ENCODE measurements at regions of chr1 and their contacts with region 1.

Region 1: DNA sequence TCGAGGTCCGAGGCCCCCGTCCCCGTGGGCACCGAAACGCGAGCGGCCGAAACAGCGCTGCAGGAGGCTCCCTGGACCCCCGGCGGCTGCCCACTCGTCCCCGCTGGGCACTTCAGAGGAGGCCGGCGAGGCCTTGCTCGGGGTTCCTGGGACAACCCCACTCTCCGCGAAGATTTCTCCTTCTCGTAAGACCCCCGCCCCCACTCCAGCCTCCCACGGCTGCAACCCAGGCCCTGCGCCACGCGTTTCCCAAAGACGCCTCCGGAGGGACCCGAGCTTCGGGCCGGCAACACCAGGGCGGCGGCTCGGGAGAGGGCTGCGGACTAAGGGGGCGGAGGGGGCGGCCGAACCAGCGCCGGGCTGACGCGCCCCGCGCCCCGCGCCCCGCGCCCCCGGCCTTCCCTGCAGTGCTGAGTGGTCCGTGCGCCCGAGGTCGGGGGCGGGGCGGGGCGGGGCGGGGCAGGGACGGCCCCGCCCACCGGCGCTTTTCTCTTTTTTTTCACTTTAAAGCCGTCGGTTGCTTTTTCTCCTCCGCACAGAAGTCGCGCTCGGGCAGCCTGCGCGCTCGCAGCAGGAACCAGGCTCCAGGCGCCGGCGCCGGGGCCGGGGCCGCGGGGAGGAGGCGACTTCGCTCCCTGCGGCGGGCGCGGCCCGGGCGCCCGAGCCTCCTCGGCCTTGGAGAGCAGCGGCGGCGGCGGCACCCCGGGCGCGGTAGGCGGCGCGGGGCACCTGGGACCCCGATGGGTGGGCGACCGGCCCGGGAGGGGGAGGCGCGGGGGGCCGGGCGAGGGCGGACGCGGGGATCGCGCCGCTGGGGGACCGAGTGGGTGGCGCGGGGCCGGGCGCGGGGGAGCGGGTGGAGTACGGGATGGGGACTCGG is at the start of gene SPSB1:
- DNase-seq: peak; percentile 84 to 91 (median 87)
- ATAC-seq: peak; percentile 74
- H3K4me3 ChIP-seq: peak within 1 kb of the TSS; percentile 83
- H3K4me1 ChIP-seq: peaks cover 28% of the 10 kb centered on the region
- CTCF ChIP-seq: no peak
- total RNA-seq, gene SPSB1: 22.1 to 35.5 (median 26.1) TPM

Region 2: DNA sequence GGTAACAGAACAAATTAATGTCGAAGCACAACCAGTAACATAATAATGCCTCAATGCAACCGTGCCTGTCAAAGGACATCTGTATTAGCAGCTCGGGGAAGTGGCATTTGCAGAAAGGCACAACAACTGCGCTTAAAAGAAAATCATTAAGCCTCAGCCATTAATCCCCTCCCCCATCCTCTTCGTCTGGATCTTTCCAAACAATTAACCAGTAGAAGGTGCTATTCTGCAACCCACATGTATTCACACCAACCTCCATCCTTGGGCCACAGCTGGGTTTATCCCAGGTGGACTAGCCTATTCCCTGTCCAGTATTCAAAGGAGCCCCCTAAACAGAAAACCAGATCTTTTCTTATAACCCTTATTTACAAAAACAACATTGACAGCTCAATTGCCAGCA is 477.7 kb before region 1 on chr1:
- intact Hi-C with region 1: no loop called
- DNase-seq: peak in 1 of 3 donors; percentile 18
- ATAC-seq: no peak
- H3K4me3 ChIP-seq: no peak overlapping the region
- H3K4me1 ChIP-seq: peaks cover 8% of the 10 kb centered on the region
- CTCF ChIP-seq: no peak

Region 3: GRCh38 chr1:9362488-9362887 is 69.9 kb after region 1 on chr1:
- intact Hi-C with region 1: loop called in 1 of 2 experiments (anchors 10 kb)
- DNase-seq: no peak
- ATAC-seq: no peak
- H3K4me3 ChIP-seq: no peak overlapping the region
- H3K4me1 ChIP-seq: no peaks in the 10 kb centered on the region
- CTCF ChIP-seq: no peak

Region 4: GRCh38 chr1:9438431-9439073 is 146.0 kb after region 1 on chr1:
- intact Hi-C with region 1: loop called in 1 of 2 experiments (anchors 10 kb)
- DNase-seq: no peak
- ATAC-seq: no peak
- H3K4me3 ChIP-seq: no peak overlapping the region
- H3K4me1 ChIP-seq: peaks cover 39% of the 10 kb centered on the region
- CTCF ChIP-seq: no peak

Region 5: DNA sequence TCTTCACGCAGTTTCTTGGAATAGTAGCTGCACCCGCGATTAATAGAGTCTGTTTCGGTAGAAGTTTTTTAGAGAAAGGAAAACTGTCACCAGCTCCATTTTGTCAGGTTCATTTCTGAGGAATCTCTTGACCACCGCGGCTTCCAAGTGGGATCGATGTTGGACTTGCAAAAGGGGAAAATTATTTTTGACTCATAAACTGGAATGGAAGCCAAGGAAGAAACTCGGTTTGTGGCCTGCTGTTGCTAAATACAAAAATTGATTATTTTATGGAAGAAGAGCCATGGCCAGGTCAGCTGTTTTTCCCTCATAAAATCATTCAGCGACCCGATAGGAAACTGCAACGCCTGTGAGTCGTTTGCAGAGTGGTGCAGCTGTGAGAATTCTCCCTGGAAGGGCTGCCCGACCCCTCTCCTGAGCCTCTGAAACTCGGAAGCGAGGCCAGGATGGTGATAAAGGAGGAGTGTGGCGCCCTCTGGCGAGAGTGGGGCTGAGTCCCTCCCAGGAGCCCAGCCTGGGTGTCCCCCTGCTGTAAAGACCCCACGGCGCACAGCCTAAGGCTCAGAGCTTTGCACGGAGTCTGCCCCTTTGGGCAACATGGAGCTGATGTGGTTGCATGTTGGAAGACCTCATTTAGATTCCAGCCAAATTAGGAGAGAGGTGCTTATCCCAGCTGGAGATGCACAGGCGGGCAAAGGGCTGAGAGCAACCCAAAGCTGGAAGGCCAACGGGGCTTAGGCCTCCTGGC is 163.1 kb after region 1 on chr1:
- intact Hi-C with region 1: loop called (anchors 10 kb)
- DNase-seq: peak; percentile 69 to 87 (median 80)
- ATAC-seq: peak; percentile 77
- H3K4me3 ChIP-seq: no peak overlapping the region
- H3K4me1 ChIP-seq: no peaks in the 10 kb centered on the region
- CTCF ChIP-seq: peak; percentile 76

Region 6: DNA sequence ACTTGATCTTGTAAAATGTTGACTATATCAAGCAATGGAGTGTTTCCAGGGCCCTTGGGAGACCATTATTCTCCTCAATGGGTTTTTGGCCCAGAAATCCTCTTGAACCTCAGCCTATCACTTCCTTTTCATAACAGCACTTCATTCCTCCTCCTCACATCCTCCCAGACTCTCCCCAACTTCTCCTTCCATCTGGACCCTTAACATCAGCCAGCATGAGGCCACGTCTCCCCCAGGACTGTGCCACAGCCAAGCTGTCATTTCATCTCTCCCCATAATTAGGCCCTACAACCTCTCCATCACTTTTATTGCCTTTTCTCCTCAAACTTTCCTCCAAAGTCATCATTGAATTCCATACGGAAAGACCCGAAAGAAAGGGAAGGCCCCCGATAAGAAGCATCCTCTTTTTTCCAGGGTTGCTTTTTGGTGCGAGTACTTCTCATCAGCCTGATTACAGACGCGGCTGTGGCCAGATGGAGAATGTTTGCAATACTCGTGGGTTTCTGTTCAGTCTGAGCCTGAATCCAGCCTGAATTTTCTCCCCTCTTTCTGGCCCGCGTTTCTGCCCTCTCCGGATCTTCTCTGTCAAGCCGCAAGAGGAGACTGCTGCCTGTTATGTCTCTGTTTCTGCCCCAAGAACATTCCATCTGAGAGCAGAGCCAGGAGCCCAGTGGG is 194.0 kb after region 1 on chr1:
- intact Hi-C with region 1: loop called in 1 of 2 experiments (anchors 10 kb)
- DNase-seq: no peak
- ATAC-seq: no peak
- H3K4me3 ChIP-seq: no peak overlapping the region
- H3K4me1 ChIP-seq: no peaks in the 10 kb centered on the region
- CTCF ChIP-seq: no peak

Region 7: DNA sequence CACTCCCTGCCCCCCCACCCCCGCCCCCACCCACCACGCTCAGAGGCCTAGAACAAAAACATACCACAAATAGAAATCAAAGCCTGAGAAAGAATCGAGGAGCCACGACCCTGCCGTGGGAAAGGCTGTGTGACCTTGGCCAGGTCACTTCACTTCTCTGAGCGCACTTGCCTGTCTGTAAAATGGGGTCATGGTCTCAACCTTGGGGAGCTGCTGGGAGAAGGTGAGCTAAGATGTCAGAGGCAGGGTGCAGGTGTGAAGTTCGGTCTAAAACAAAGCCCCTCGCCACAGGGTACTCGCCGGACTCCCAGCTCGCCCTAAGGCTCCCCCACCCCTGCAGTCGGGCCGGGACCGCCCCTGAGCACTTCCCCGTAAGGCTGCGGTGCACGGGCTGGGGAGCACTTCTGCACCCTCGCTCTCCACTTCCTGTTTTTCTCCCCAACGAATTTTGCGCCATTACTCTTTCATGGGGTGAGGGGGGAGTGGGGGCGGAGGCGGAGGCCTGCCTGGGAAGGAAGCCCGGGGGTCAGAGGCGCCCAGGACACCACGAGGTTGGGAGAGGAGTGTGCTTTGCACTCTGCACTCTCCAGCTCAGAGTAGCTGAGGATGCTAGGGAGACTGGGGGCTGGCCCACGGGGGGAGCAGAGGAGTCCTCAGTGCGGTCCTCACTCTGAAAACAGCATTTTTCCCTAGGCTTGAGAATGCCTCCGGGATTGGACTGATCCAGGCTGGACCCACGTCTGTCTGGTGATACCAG is 337.0 kb after region 1 on chr1:
- intact Hi-C with region 1: no loop called
- DNase-seq: peak; percentile 60 to 91 (median 69)
- ATAC-seq: peak; percentile 69
- H3K4me3 ChIP-seq: no peak overlapping the region
- H3K4me1 ChIP-seq: peaks cover 3% of the 10 kb centered on the region
- CTCF ChIP-seq: no peak